MCF 10A (cell line): ENCODE measurements at regions of chr15 and their contacts with region 1.

Region 1: GRCh38 chr15:80567721-80568157 is 127.4 kb upstream of the ABHD17C start:
- DNase-seq: peak; percentile 85
- H3K4me3 Mint-ChIP-seq: no peak overlapping the region
- H3K27ac Mint-ChIP-seq: no peak overlapping the region
- H3K4me1 Mint-ChIP-seq: peaks cover 28% of the 10 kb centered on the region
- H3K27me3 Mint-ChIP-seq: no peaks in the 10 kb centered on the region
- CTCF ChIP-seq: peak; percentile 74

Region 2: GRCh38 chr15:80580106-80580505 is 12.4 kb after region 1 on chr15:
- CTCF ChIA-PET with region 1: interaction called, 79 read pairs
- POLR2A ChIA-PET with region 1: interaction called, 29 read pairs
- intact Hi-C with region 1: no loop called
- DNase-seq: peak; percentile 98
- H3K4me3 Mint-ChIP-seq: peak overlapping the region; percentile 1
- H3K27ac Mint-ChIP-seq: peak overlapping the region; percentile 91
- H3K4me1 Mint-ChIP-seq: peaks cover 35% of the 10 kb centered on the region
- H3K27me3 Mint-ChIP-seq: no peaks in the 10 kb centered on the region
- CTCF ChIP-seq: no peak

Region 3: GRCh38 chr15:80609512-80609946 is 41.8 kb after region 1 on chr15:
- CTCF ChIA-PET with region 1: interaction called, 12 read pairs
- POLR2A ChIA-PET with region 1: interaction called, 11 read pairs
- intact Hi-C with region 1: no loop called
- DNase-seq: peak; percentile 75
- H3K4me3 Mint-ChIP-seq: no peak overlapping the region
- H3K27ac Mint-ChIP-seq: peak overlapping the region; percentile 68
- H3K4me1 Mint-ChIP-seq: peaks cover 24% of the 10 kb centered on the region
- H3K27me3 Mint-ChIP-seq: no peaks in the 10 kb centered on the region
- CTCF ChIP-seq: no peak

Region 4: GRCh38 chr15:80660122-80660521 is 92.4 kb after region 1 on chr15:
- CTCF ChIA-PET with region 1: interaction called, 13 read pairs
- POLR2A ChIA-PET with region 1: interaction called, 3 read pairs
- intact Hi-C with region 1: no loop called
- DNase-seq: peak; percentile 63
- H3K4me3 Mint-ChIP-seq: no peak overlapping the region
- H3K27ac Mint-ChIP-seq: no peak overlapping the region
- H3K4me1 Mint-ChIP-seq: peaks cover 17% of the 10 kb centered on the region
- H3K27me3 Mint-ChIP-seq: no peaks in the 10 kb centered on the region
- CTCF ChIP-seq: peak; percentile 48

Region 5: GRCh38 chr15:80695104-80695910 is 127.6 kb after region 1 on chr15 and contains the start of gene ABHD17C:
- CTCF ChIA-PET with region 1: interaction called, 53 read pairs
- POLR2A ChIA-PET with region 1: interaction called, 35 read pairs
- intact Hi-C with region 1: loop called (anchors 1 kb)
- DNase-seq: peak; percentile 65
- H3K4me3 Mint-ChIP-seq: peak within 1 kb of the TSS; percentile 92
- H3K27ac Mint-ChIP-seq: peak within 1 kb of the TSS; percentile 73
- H3K4me1 Mint-ChIP-seq: peaks cover 39% of the 10 kb centered on the region
- H3K27me3 Mint-ChIP-seq: no peaks in the 10 kb centered on the region
- CTCF ChIP-seq: no peak
- total RNA-seq, gene ABHD17C: 10.1 and 11.9 TPM in 2 replicates

Region 6: GRCh38 chr15:80758130-80758745 is 190.5 kb after region 1 on chr15:
- CTCF ChIA-PET with region 1: interaction called, 10 read pairs
- POLR2A ChIA-PET with region 1: no interaction called
- intact Hi-C with region 1: no loop called
- DNase-seq: no peak
- H3K4me3 Mint-ChIP-seq: no peak overlapping the region
- H3K27ac Mint-ChIP-seq: no peak overlapping the region
- H3K4me1 Mint-ChIP-seq: no peaks in the 10 kb centered on the region
- H3K27me3 Mint-ChIP-seq: no peaks in the 10 kb centered on the region
- CTCF ChIP-seq: no peak

Region 7: DNA sequence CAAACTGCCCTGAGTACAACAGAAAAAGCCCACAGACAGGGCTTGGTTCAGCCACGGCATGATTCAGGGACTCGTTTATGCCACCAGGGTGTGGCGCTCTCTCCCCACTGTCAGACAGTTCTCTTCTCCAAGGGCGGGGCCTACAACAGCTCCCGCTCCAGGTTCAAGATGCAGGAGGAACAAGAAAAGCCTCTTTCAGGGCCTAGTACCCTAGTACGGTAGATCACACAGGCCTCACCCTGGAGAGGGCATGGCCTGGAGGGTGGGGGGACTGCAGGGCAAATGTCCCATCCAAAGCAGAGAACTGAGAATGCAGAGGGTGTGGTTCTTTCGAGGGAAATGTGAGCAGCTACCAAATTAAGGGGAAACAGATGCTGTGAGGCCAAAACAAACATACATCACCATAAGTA is 409.9 kb after region 1 on chr15:
- CTCF ChIA-PET with region 1: interaction called, 70 read pairs
- POLR2A ChIA-PET with region 1: interaction called, 5 read pairs
- intact Hi-C with region 1: no loop called
- DNase-seq: peak; percentile 30
- H3K4me3 Mint-ChIP-seq: no peak overlapping the region
- H3K27ac Mint-ChIP-seq: no peak overlapping the region
- H3K4me1 Mint-ChIP-seq: peaks cover 6% of the 10 kb centered on the region
- H3K27me3 Mint-ChIP-seq: no peaks in the 10 kb centered on the region
- CTCF ChIP-seq: no peak